Stomach (tissue), 19 donors: ENCODE measurements at regions of chr7 and their contacts with region 1.

Region 1: GRCh38 chr7:149662591-149663095 is 110.7 kb downstream of the ZNF467 start:
- DNase-seq: peak; percentile 77 to 84
- H3K4me3 ChIP-seq: no peak overlapping the region
- H3K27ac ChIP-seq: peak overlapping the region in 1 of 5 donors; percentile 54
- H3K4me1 ChIP-seq: no peaks in the 10 kb centered on the region
- H3K27me3 ChIP-seq: peaks cover 0 to 7% (median 0%) of the 10 kb centered on the region in 3 donors
- CTCF ChIP-seq: peak in 5 of 7 experiments; percentile 28 to 62 (median 42)
- EP300 ChIP-seq: peak; percentile 31
- POLR2A ChIP-seq: no peak

Region 2: GRCh38 chr7:149742075-149742701 is 79.5 kb after region 1 on chr7:
- intact Hi-C with region 1: loop called (anchors 5 kb)
- DNase-seq: peak; percentile 74 to 86
- H3K4me3 ChIP-seq: peak overlapping the region; percentile 37 to 41 (median 37)
- H3K27ac ChIP-seq: peak overlapping the region in 1 of 5 donors; percentile 49
- H3K4me1 ChIP-seq: peaks cover 11 to 27% (median 25%) of the 10 kb centered on the region in 4 donors
- H3K27me3 ChIP-seq: peaks cover 0 to 6% (median 0%) of the 10 kb centered on the region in 3 donors
- CTCF ChIP-seq: peak in 5 of 7 experiments; percentile 84 to 91 (median 86)
- EP300 ChIP-seq: no peak
- POLR2A ChIP-seq: no peak